Activated CD4-positive, alpha-beta T cell treated with anti-CD3 and anti-CD28 coated beads, Interleukin-2, amount 10 ng/mL, durations not matched to agents 24 days and 14 days (primary cell): ENCODE measurements at regions of chr22 and their contacts with region 1.

Region 1: GRCh38 chr22:42202669-42203068 is 67.8 kb downstream of the TCF20 start:
- DNase-seq: peak; percentile 85
- H3K4me3 Mint-ChIP-seq: peak overlapping the region; percentile 84
- H3K27ac Mint-ChIP-seq: peak overlapping the region; percentile 84
- H3K4me1 Mint-ChIP-seq: peaks cover 39% of the 10 kb centered on the region
- H3K27me3 Mint-ChIP-seq: no peaks in the 10 kb centered on the region

Region 2: DNA sequence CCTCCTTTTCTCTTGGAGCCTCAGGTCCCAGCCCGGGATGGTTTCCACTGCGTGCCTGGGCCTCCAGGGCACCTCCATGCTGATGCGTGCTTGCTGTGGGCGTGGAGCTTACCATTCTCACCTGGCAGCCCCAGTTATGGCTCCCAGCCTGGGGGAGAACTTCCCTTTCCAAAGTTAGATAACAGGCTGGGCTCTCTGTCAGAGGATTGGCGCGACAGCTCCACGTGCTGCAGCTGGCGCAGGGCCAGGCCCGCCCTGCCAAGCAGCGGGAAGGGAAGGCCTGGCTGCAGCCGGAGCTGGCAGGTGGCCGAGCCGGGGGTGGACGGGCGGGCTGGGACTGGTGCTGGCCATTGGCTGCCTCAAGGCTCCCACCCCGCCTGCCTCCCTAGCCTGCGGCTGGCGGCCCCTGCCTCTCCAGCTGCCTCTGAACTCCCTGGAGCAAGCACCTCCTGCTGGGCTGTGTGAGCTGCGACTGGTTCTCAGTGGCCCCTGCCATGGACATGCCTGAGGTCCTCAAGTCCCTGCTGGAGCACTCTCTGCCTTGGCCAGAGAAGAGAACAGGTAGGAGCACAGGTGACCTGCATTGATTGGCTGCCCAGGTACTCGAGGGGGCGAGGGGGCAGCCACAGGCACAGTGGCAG is 835.5 kb before region 1 on chr22:
- intact Hi-C with region 1: no loop called
- DNase-seq: no peak
- H3K4me3 Mint-ChIP-seq: no peak overlapping the region
- H3K27ac Mint-ChIP-seq: no peak overlapping the region
- H3K4me1 Mint-ChIP-seq: no peaks in the 10 kb centered on the region
- H3K27me3 Mint-ChIP-seq: peaks cover 7% of the 10 kb centered on the region

Region 3: GRCh38 chr22:42160830-42161696 is 41.6 kb before region 1 on chr22:
- intact Hi-C with region 1: no loop called
- DNase-seq: no peak
- H3K4me3 Mint-ChIP-seq: no peak overlapping the region
- H3K27ac Mint-ChIP-seq: no peak overlapping the region
- H3K4me1 Mint-ChIP-seq: peaks cover 2% of the 10 kb centered on the region
- H3K27me3 Mint-ChIP-seq: no peaks in the 10 kb centered on the region

Region 4: GRCh38 chr22:42180349-42180842 is 22.3 kb before region 1 on chr22:
- intact Hi-C with region 1: loop called (anchors 2 kb)
- DNase-seq: peak; percentile 82
- H3K4me3 Mint-ChIP-seq: peak overlapping the region; percentile 57
- H3K27ac Mint-ChIP-seq: peak overlapping the region; percentile 82
- H3K4me1 Mint-ChIP-seq: peaks cover 65% of the 10 kb centered on the region
- H3K27me3 Mint-ChIP-seq: no peaks in the 10 kb centered on the region

Region 5: DNA sequence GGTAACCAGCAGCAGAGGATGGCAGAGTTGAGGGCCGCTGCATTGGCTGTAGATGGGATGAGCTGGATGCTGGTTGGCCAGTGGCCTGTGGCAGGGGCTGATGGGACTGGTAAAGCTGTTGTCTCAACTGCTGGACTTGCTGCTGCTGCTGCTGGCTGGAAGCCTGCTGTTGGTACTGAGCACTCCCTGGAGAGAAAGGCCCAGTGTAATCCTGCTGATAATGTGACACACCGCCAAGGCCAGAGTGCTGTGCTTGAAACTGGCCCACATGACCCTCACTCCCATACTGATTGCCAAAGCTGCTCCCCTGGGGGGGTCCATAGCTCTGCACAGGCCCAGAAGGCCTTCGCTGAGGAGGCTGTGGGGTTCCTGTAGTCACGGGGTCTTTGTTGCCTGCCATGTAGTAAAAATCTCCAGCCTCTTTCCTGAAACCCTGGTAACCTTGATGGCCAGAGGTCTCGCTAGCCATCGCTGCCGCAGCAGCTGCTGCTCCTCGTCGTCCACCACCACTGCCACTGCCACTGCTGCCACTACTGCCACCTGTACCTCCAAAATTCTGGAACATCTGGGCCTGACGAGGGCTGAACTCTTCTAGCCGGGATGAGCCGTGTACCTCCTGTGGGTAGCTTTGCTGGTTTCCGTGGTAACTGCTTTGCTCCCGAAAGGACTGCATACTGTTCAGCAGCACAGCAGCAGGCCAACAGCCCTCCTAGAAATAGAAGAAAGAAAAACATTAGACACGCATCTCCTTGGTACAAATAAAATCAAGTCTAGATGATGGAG is 12.2 kb after region 1 on chr22:
- intact Hi-C with region 1: no loop called
- DNase-seq: no peak
- H3K4me3 Mint-ChIP-seq: no peak overlapping the region
- H3K27ac Mint-ChIP-seq: peak overlapping the region; percentile 30
- H3K4me1 Mint-ChIP-seq: peaks cover 16% of the 10 kb centered on the region
- H3K27me3 Mint-ChIP-seq: no peaks in the 10 kb centered on the region